ENCODE measurements at regions of chr15 and their contacts with region 1.

Region 1: GRCh38 chr15:48507416-48508065 is 138.0 kb downstream of the FBN1 start:
- DNase-seq: no peak

Region 2: DNA sequence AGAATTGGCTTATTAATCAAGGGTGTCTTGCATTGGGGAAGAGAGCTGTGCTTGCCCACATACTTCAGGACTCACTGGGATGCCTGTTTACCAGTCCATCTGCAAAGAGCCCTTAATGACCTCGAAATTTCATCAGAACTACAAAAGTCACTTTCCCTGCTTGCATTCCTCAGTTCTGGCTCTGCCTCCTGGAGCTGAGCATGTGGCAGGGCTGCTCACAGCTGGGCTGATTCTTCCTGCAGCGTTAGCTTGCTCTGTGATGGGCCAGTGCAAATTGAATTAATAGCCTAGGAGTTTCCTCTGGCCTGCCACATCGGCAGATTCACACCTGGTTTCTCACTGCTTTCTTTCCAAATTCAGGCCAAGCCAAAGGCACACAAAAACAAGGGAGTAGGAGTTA is 67.5 kb before region 1 on chr15:
- intact Hi-C with region 1: loop called (anchors 10 kb)
- DNase-seq: no peak

Measured in cardiac septum (tissue), 1 donor.